Activated CD8-positive, alpha-beta T cell treated with anti-CD3 and anti-CD28 coated beads for 36 hours (primary cell): ENCODE measurements at regions of chr16 and their contacts with region 1.

Region 1: DNA sequence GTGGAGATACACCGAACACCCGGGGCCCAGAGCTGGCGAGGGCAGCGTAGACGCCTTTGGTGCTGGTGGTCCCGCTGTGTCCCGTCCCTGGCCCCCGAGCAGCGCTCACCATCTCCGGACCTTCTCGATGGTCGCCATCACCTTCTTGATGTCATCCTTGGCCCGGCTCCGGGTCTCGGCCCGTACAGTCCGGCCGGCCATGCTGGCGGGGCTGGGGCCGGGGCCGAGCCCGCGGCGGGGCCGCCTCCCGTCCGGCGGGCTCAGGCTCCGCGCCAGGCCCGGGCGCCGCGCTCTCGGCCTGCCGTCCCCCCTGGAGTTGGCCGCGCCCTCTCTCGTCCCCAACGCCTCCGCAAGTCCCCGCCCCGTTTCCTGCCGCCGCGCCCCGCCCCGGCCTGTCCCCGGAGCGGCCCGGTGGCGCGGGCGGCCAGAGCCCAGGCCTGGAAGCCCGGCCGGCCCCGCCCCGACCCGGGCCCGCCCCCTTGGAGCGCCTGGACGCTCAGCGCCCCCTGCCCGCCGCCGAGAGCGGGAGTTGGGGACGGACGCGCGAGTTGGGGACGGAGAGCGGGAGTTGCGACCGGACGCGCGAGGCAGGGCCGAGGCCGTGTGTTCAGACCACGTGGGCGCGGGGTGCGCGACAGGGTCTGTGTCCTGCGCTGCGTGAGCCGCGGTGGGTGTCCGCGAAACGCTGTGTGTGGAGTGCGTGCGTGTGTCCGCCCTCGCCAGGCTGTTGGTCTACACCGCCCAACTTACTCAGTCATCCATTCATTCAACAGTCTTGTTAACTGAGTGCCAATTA is at the start of gene BCL7C:
- DNase-seq: peak; percentile 90
- ATAC-seq: peak; percentile 78
- H3K4me3 Mint-ChIP-seq: peak within 1 kb of the TSS; percentile 86
- H3K27ac Mint-ChIP-seq: peak within 1 kb of the TSS; percentile 88
- H3K4me1 Mint-ChIP-seq: peaks cover 36% of the 10 kb centered on the region
- H3K27me3 Mint-ChIP-seq: no peaks in the 10 kb centered on the region
- CTCF ChIP-seq: no peak
- total RNA-seq, gene BCL7C: 21.8 to 23.6 TPM

Region 2: GRCh38 chr16:30657866-30658730 is 235.8 kb before region 1 on chr16 and contains the start of gene FBRS:
- CTCF ChIA-PET with region 1: no interaction called
- POLR2A ChIA-PET with region 1: no interaction called
- intact Hi-C with region 1: loop called (anchors 10 kb)
- DNase-seq: peak; percentile 100
- ATAC-seq: peak; percentile 79
- H3K4me3 Mint-ChIP-seq: peak within 1 kb of the TSS; percentile 97
- H3K27ac Mint-ChIP-seq: peak within 1 kb of the TSS; percentile 100
- H3K4me1 Mint-ChIP-seq: peaks cover 41% of the 10 kb centered on the region
- H3K27me3 Mint-ChIP-seq: no peaks in the 10 kb centered on the region
- CTCF ChIP-seq: peak; percentile 62
- total RNA-seq, gene FBRS: 80.3 to 85.8 TPM

Region 3: GRCh38 chr16:30821891-30822290 is 72.1 kb before region 1 on chr16:
- CTCF ChIA-PET with region 1: no interaction called
- POLR2A ChIA-PET with region 1: no interaction called
- intact Hi-C with region 1: no loop called
- DNase-seq: no peak
- ATAC-seq: no peak
- H3K4me3 Mint-ChIP-seq: no peak overlapping the region
- H3K27ac Mint-ChIP-seq: no peak overlapping the region
- H3K4me1 Mint-ChIP-seq: no peaks in the 10 kb centered on the region
- H3K27me3 Mint-ChIP-seq: no peaks in the 10 kb centered on the region
- CTCF ChIP-seq: no peak

Region 4: GRCh38 chr16:30853758-30854157 is 40.2 kb before region 1 on chr16:
- CTCF ChIA-PET with region 1: no interaction called
- POLR2A ChIA-PET with region 1: no interaction called
- intact Hi-C with region 1: no loop called
- DNase-seq: no peak
- ATAC-seq: no peak
- H3K4me3 Mint-ChIP-seq: no peak overlapping the region
- H3K27ac Mint-ChIP-seq: no peak overlapping the region
- H3K4me1 Mint-ChIP-seq: no peaks in the 10 kb centered on the region
- H3K27me3 Mint-ChIP-seq: no peaks in the 10 kb centered on the region
- CTCF ChIP-seq: no peak

Region 5: GRCh38 chr16:30874821-30875717 is 18.9 kb before region 1 on chr16:
- CTCF ChIA-PET with region 1: no interaction called
- POLR2A ChIA-PET with region 1: interaction called, 64 read pairs
- intact Hi-C with region 1: loop called (anchors 2 kb)
- DNase-seq: peak; percentile 91
- ATAC-seq: peak; percentile 79
- H3K4me3 Mint-ChIP-seq: peak overlapping the region; percentile 98
- H3K27ac Mint-ChIP-seq: peak overlapping the region; percentile 99
- H3K4me1 Mint-ChIP-seq: peaks cover 34% of the 10 kb centered on the region
- H3K27me3 Mint-ChIP-seq: no peaks in the 10 kb centered on the region
- CTCF ChIP-seq: no peak

Region 6: GRCh38 chr16:31008154-31008950 is 114.4 kb after region 1 on chr16:
- CTCF ChIA-PET with region 1: no interaction called
- POLR2A ChIA-PET with region 1: no interaction called
- intact Hi-C with region 1: no loop called
- DNase-seq: no peak
- ATAC-seq: no peak
- H3K4me3 Mint-ChIP-seq: no peak overlapping the region
- H3K27ac Mint-ChIP-seq: no peak overlapping the region
- H3K4me1 Mint-ChIP-seq: peaks cover 13% of the 10 kb centered on the region
- H3K27me3 Mint-ChIP-seq: peaks cover 18% of the 10 kb centered on the region
- CTCF ChIP-seq: no peak